Pancreas (tissue), 10 donors: ENCODE measurements at regions of chr4 and their contacts with region 1.

Region 1: DNA sequence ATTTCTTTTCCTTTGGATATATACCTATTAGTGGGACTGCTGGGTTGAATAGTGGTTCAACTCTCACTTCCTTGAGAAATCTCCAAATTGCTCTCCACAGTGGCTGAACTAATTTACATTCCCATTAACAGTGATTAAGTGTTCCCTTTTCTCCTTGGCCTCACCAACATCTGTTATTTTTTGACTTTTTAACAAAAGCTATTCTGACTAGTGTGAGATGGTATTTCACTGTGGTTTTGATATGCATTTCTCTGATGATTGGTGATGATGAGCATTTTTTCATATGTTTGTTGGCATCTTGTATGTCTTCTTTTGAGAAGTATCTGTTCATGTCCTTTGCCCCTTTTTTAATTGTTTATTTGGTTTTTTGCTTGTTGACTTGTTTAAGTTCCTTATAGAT is 413.0 kb downstream of the MAPK10 start:
- DNase-seq: no peak
- ATAC-seq: no peak
- H3K4me3 ChIP-seq: no peak overlapping the region
- H3K27ac ChIP-seq: no peak overlapping the region
- H3K4me1 ChIP-seq: no peaks in the 10 kb centered on the region
- H3K27me3 ChIP-seq: no peaks in the 10 kb centered on the region
- CTCF ChIP-seq: no peak

Region 2: DNA sequence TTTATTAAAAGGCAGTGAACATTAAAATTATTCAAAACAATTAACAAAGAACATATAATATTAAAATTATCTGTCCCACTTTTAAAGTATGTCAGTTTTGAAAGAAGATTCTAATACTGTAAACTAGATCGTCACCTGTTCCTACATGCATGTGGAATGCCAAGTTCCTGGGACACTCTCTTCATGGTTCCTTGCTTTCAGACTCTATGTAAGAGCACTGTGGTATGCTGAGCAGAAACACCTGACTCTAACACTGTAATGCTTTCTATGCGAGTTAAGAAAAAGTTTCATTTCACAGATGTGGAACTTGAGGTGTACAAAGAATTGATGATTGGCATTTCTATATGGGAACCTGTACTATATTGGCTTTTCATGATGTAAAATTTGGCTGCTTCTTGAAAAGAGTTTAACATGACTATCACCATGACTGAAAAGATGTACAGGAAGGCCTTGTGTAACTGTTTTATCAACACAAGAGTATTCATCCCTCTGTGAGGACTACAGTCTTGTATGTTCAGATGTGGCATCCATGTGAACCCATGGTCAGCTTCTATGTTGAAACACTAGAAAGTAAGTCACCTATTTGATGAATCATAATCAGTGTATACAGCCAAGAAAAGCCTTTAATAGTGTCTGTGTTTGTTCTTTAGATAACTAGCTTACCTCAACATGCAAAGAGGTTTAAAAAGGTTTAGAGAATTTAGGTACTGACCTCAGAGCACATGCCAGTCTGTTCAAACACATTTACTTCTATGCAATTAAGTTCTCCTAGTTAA is 117.4 kb before region 1 on chr4:
- intact Hi-C with region 1: loop called in 1 of 3 experiments (anchors 10 kb)
- DNase-seq: no peak
- ATAC-seq: peak in 1 of 4 donors; percentile 3
- H3K4me3 ChIP-seq: peak overlapping the region in 2 of 4 donors; percentile 38 to 51
- H3K27ac ChIP-seq: peak overlapping the region in 2 of 4 donors; percentile 82 to 93
- H3K4me1 ChIP-seq: peaks cover 18 to 38% (median 29%) of the 10 kb centered on the region in 3 donors
- H3K27me3 ChIP-seq: no peaks in the 10 kb centered on the region
- CTCF ChIP-seq: no peak

Region 3: GRCh38 chr4:86261636-86262035 is 314.8 kb after region 1 on chr4:
- intact Hi-C with region 1: no loop called
- DNase-seq: no peak
- ATAC-seq: no peak
- H3K4me3 ChIP-seq: no peak overlapping the region
- H3K27ac ChIP-seq: no peak overlapping the region
- H3K4me1 ChIP-seq: no peaks in the 10 kb centered on the region
- H3K27me3 ChIP-seq: no peaks in the 10 kb centered on the region
- CTCF ChIP-seq: no peak